ENCODE measurements at regions of chr9 and their contacts with region 1.

Region 1: DNA sequence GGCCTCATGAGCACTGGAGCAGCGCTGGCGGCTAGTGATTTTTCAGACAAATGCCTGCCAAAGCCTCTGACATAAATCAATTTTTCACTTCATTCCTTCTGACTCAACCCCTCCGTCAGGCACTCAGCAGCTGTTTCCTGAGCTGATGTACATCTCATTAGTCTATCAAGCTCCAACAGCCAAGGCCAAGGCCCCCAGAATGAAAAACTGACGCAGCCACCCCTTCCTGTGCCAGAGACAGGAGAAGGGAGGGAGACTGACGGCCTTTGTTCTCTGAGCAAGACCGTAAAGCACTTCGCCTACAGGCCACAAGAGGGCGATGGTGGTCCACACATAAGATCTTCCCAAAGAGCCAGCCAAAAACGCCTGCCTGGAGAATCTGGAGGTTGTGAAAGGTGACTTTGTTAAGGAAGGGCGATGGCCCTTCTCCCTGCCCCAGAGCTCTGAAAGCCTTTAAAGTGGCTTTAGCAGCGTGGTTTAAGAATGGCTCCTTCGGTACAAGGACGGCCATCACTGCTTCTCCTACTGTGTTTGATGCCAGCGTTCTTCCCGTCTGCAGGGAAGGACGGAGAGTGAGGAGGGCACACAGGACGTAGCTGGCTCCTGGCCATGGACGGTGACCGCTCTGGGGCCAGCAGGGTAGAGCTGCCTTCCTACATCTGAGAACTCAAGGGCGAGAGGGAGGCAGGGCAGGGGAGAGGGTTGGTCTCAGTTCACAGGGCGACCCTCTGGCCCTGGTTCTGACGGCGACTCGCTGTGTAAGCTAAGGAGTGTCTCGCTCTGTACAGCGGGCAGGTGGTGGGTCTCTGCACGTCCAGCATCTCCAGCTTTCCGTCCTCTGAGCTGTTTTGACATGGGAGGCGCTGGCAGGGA is 37.0 kb downstream of the ALG2 start:
- DNase-seq: peak; percentile 51
- H3K4me3 ChIP-seq: peak overlapping the region; percentile 15; the same call in 1 of the 2 replicates
- CTCF ChIP-seq: peak; percentile 89

Region 2: DNA sequence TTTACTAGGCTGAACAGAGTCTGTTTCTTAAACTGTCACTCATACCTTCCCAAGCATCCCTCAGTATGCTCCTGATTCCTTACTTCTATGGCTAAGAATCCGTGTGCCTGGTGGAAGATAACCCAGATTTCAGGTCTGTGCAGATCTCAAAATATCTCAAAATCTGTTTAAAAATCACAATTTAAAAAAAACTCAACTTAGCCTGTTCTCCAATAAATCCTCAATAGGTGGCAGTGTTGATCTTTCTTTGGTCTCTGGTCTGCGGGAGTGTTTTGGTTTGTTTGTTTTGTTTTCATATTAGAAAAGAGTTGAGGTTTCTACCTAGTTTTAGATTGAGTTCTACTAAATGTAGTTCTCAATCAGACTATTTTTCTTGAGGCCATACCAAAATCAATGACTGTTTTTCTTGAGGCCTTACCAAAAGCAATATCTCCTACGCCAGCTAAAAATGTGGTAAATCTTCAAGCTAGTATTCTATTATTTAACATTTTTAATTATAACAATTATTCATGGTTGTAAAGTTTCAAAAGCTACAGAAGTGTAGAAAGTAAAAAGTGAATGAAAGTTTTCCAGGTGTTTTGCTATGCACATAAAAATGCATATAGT is 21.8 kb before region 1 on chr9:
- CTCF ChIA-PET with region 1: interaction called, 34 read pairs
- POLR2A ChIA-PET with region 1: no interaction called
- DNase-seq: no peak
- H3K4me3 ChIP-seq: no peak overlapping the region
- CTCF ChIP-seq: peak; percentile 44

Region 3: DNA sequence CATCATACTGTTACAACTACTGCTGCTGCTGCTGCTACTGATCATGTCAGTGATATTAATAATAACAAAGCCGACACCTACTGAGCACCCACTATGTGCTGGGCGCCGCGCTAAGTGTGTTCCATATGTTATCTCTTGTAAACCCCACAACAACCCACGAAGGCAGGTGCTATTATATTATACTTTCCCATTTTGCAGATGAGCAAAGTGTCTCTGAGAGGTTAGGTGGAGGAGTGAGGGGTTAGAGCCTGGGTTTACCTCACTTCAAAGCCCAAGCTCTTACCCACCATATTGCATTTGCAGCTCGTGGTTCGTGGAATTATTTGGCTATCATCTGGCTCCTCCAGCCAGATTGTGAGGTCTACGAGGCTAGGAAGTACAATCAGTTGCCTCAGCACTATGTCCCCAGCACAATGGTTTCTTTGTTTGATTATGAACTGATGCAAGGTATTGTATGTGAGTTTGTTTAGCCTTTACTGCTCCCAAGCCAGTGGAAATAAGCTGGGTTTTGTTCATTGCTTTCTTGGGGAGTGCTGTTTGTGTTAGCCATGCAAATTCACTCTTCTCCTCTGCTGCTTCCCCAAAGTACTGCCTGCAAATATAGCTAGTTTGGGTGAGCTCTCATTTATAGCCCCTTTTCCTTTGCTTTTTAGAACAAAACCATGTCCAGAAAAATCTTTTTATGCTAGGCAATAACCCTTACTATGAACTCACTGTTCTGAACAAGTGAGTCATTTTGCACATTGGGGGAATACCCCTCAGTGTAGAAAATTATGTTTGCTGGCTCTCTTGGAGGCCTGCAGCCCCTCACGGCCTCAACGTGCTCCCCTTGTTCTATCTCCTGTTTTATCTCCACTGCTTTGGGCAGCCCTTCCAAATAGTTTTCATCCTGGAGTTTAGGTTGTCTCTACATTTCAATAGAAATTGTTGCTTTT is 10.9 kb before region 1 on chr9:
- CTCF ChIA-PET with region 1: interaction called, 57 read pairs
- POLR2A ChIA-PET with region 1: no interaction called
- DNase-seq: no peak
- H3K4me3 ChIP-seq: no peak overlapping the region
- CTCF ChIP-seq: no peak

Region 4: GRCh38 chr9:99211741-99212140 is 27.0 kb after region 1 on chr9:
- CTCF ChIA-PET with region 1: interaction called, 37 read pairs
- POLR2A ChIA-PET with region 1: no interaction called
- DNase-seq: no peak
- H3K4me3 ChIP-seq: no peak overlapping the region
- CTCF ChIP-seq: no peak

Region 5: GRCh38 chr9:99221621-99222415 is 37.1 kb after region 1 on chr9 and contains the starts of genes ALG2 and SEC61B:
- CTCF ChIA-PET with region 1: interaction called, 37 read pairs
- POLR2A ChIA-PET with region 1: interaction called, 3 read pairs
- DNase-seq: peak; percentile 77
- H3K4me3 ChIP-seq: peak within 1 kb of the TSS; percentile 92
- CTCF ChIP-seq: no peak

Region 6: GRCh38 chr9:100011062-100011681 is 826.5 kb after region 1 on chr9:
- CTCF ChIA-PET with region 1: interaction called, 23 read pairs
- POLR2A ChIA-PET with region 1: no interaction called
- DNase-seq: no peak
- H3K4me3 ChIP-seq: no peak overlapping the region
- CTCF ChIP-seq: peak; percentile 11